Naive thymus-derived CD4-positive, alpha-beta T cell (primary cell): ENCODE measurements at regions of chr7 and their contacts with region 1.

Region 1: GRCh38 chr7:107168233-107169119 is at the start of gene HBP1:
- DNase-seq: peak; percentile 80 to 100 (median 99)
- ATAC-seq: peak; percentile 87
- H3K4me3 ChIP-seq: peak within 1 kb of the TSS; percentile 84
- H3K4me3 Mint-ChIP-seq: peak within 1 kb of the TSS; percentile 92 to 100 (median 96)
- H3K27ac ChIP-seq: peak within 1 kb of the TSS; percentile 100
- H3K27ac Mint-ChIP-seq: peak within 1 kb of the TSS; percentile 98 to 100 (median 99)
- H3K4me1 ChIP-seq: peaks cover 28 to 35% of the 10 kb centered on the region in 2 donors
- H3K4me1 Mint-ChIP-seq: peaks cover 25 to 50% (median 41%) of the 10 kb centered on the region in 7 donors
- H3K27me3 ChIP-seq: no peaks in the 10 kb centered on the region
- H3K27me3 Mint-ChIP-seq: peaks cover 0 to 28% (median 0%) of the 10 kb centered on the region in 5 donors
- total RNA-seq, gene HBP1: 34.6 to 219 (median 124) TPM

Region 2: GRCh38 chr7:105531792-105532671 is 1636.4 kb before region 1 on chr7 and contains the start of gene RINT1:
- CTCF ChIA-PET with region 1: no interaction called
- POLR2A ChIA-PET with region 1: interaction called, 4 read pairs
- intact Hi-C with region 1: loop called (anchors 1 to 5 kb)
- DNase-seq: peak; percentile 72 to 90 (median 81)
- ATAC-seq: peak; percentile 97
- H3K4me3 ChIP-seq: peak within 1 kb of the TSS; percentile 86
- H3K4me3 Mint-ChIP-seq: peak within 1 kb of the TSS; percentile 87 to 99 (median 93)
- H3K27ac ChIP-seq: peak within 1 kb of the TSS; percentile 83
- H3K27ac Mint-ChIP-seq: peak within 1 kb of the TSS; percentile 87 to 98 (median 92)
- H3K4me1 ChIP-seq: peaks cover 13 to 18% of the 10 kb centered on the region in 2 donors
- H3K4me1 Mint-ChIP-seq: peaks cover 21 to 59% (median 38%) of the 10 kb centered on the region in 7 donors
- H3K27me3 ChIP-seq: no peaks in the 10 kb centered on the region
- H3K27me3 Mint-ChIP-seq: no peaks in the 10 kb centered on the region
- total RNA-seq, gene RINT1: 23.0 to 31.8 (median 26.0) TPM

Region 3: DNA sequence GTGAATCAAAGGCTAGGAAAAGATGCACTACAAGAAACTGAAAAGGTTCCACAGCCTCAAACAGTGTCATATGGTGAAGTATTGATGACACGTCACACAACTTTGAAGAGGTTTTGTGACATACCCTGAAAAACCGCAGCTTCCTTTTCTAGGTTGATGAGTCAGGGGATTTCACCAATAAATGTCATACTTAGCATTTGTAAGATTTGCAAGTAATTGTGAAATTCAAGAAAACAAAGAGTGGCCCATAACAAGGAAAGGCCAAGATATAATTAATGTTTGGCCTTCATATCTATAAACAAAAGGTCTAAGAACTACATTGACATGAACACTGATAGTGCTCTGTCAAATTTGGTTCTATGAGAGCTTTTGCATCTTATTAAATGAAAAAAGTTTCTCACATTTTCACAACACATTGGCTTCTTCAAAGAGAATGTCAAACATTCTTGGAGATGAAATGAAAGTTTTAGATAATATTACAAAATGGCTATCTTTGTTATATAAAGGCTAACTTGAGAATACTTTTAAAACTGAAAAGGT is 821.7 kb before region 1 on chr7:
- CTCF ChIA-PET with region 1: no interaction called
- POLR2A ChIA-PET with region 1: no interaction called
- intact Hi-C with region 1: loop called in 1 of 2 experiments (anchors 5 kb)
- DNase-seq: peak in 8 of 9 donors; percentile 28 to 61 (median 50)
- ATAC-seq: peak; percentile 78
- H3K4me3 ChIP-seq: no peak overlapping the region
- H3K4me3 Mint-ChIP-seq: peak overlapping the region in 1 of 10 donors; percentile 47
- H3K27ac ChIP-seq: no peak overlapping the region
- H3K27ac Mint-ChIP-seq: peak overlapping the region in 2 of 9 donors; percentile 19 to 94
- H3K4me1 ChIP-seq: peaks cover 6 to 19% of the 10 kb centered on the region in 2 donors
- H3K4me1 Mint-ChIP-seq: peaks cover 5 to 35% (median 13%) of the 10 kb centered on the region in 7 donors
- H3K27me3 ChIP-seq: no peaks in the 10 kb centered on the region
- H3K27me3 Mint-ChIP-seq: peaks cover 1 to 61% (median 31%) of the 10 kb centered on the region in 5 donors

Region 4: DNA sequence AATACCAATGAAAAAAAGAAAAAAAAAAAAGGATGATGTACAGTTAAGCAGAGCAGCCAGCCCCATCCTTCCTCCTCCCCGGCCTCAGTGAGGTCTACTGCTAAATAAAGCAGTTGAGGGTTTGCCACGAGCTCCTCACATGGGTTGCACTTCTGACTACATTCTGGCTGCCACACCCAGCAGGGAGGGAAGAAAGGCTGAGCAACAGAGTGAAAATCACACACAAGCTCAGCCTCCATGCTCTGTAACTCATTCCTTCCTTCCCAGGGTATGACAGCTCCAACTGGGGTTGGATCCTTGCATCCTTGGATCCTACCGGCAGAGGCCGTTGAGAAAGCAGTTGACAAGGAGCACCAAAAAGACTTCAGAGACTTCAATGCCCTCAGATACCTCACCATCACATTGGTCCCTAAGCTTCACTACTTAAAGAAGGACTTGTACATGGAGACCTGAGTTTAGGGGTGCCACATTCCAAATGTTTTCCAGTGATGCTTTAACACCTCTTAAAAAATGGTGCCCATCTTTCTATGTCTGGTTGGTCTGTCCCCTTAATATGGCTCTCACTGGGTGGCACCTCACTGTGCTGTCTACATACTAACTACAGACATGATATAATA is 356.3 kb before region 1 on chr7:
- CTCF ChIA-PET with region 1: no interaction called
- POLR2A ChIA-PET with region 1: no interaction called
- intact Hi-C with region 1: no loop called
- DNase-seq: no peak
- ATAC-seq: peak; percentile 72
- H3K4me3 ChIP-seq: no peak overlapping the region
- H3K4me3 Mint-ChIP-seq: no peak overlapping the region
- H3K27ac ChIP-seq: no peak overlapping the region
- H3K27ac Mint-ChIP-seq: peak overlapping the region in 1 of 9 donors; percentile 32
- H3K4me1 ChIP-seq: no peaks in the 10 kb centered on the region
- H3K4me1 Mint-ChIP-seq: peaks cover 0 to 15% (median 3%) of the 10 kb centered on the region in 7 donors
- H3K27me3 ChIP-seq: peaks cover 0 to 1% of the 10 kb centered on the region in 2 donors
- H3K27me3 Mint-ChIP-seq: peaks cover 0 to 5% (median 0%) of the 10 kb centered on the region in 5 donors

Region 5: GRCh38 chr7:106865130-106866041 is 303.1 kb before region 1 on chr7 and contains the start of gene PIK3CG:
- CTCF ChIA-PET with region 1: no interaction called
- POLR2A ChIA-PET with region 1: interaction called, 18 read pairs
- intact Hi-C with region 1: loop called (anchors 1 kb)
- DNase-seq: peak in 7 of 9 donors; percentile 43 to 77 (median 70)
- ATAC-seq: peak; percentile 96
- H3K4me3 ChIP-seq: peak within 1 kb of the TSS; percentile 62
- H3K4me3 Mint-ChIP-seq: peak within 1 kb of the TSS; percentile 86 to 98 (median 94)
- H3K27ac ChIP-seq: peak within 1 kb of the TSS; percentile 75
- H3K27ac Mint-ChIP-seq: peak within 1 kb of the TSS; percentile 90 to 96 (median 95)
- H3K4me1 ChIP-seq: peaks cover 50% of the 10 kb centered on the region in 2 donors
- H3K4me1 Mint-ChIP-seq: peaks cover 44 to 85% (median 72%) of the 10 kb centered on the region in 7 donors
- H3K27me3 ChIP-seq: no peaks in the 10 kb centered on the region
- H3K27me3 Mint-ChIP-seq: no peaks in the 10 kb centered on the region
- total RNA-seq, gene PIK3CG: 25.1 to 54.9 (median 30.6) TPM

Region 6: GRCh38 chr7:107180378-107180777 is 11.9 kb after region 1 on chr7:
- CTCF ChIA-PET with region 1: interaction called, 4 read pairs
- POLR2A ChIA-PET with region 1: interaction called, 54 read pairs
- intact Hi-C with region 1: loop called (anchors 1 kb)
- DNase-seq: peak in 1 of 9 donors; percentile 64
- ATAC-seq: peak; percentile 43
- H3K4me3 ChIP-seq: no peak overlapping the region
- H3K4me3 Mint-ChIP-seq: peak overlapping the region in 4 of 10 donors; percentile 3 to 22 (median 7)
- H3K27ac ChIP-seq: no peak overlapping the region
- H3K27ac Mint-ChIP-seq: peak overlapping the region in 7 of 9 donors; percentile 1 to 42 (median 33)
- H3K4me1 ChIP-seq: peaks cover 3 to 6% of the 10 kb centered on the region in 2 donors
- H3K4me1 Mint-ChIP-seq: peaks cover 11 to 74% (median 60%) of the 10 kb centered on the region in 7 donors
- H3K27me3 ChIP-seq: no peaks in the 10 kb centered on the region
- H3K27me3 Mint-ChIP-seq: no peaks in the 10 kb centered on the region

Region 7: DNA sequence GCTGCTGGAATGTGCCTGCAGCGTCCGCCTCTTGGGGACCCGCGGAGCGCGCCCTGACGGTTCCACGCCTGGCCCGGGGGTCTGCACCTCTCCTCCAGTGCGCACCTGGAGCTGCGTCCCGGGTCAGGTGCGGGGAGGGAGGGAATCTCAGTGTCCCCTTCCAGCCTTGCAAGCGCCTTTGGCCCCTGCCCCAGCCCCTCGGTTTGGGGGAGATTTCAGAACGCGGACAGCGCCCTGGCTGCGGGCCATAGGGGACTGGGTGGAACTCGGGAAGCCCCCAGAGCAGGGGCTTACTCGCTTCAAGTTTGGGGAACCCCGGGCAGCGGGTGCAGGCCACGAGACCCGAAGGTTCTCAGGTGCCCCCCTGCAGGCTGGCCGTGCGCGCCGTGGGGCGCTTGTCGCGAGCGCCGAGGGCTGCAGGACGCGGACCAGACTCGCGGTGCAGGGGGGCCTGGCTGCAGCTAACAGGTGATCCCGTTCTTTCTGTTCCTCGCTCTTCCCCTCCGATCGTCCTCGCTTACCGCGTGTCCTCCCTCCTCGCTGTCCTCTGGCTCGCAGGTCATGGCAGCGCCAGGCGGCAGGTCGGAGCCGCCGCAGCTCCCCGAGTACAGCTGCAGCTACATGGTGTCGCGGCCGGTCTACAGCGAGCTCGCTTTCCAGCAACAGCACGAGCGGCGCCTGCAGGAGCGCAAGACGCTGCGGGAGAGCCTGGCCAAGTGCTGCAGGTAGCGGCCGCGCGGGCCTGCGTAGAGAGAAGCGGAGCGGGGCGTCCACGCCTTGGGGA is 492.8 kb after region 1 on chr7:
- CTCF ChIA-PET with region 1: no interaction called
- POLR2A ChIA-PET with region 1: no interaction called
- intact Hi-C with region 1: loop called in 1 of 2 experiments (anchors 1 kb)
- DNase-seq: peak in 7 of 9 donors; percentile 12 to 60 (median 14)
- ATAC-seq: peak; percentile 66
- H3K4me3 ChIP-seq: peak overlapping the region; percentile 30
- H3K4me3 Mint-ChIP-seq: peak overlapping the region; percentile 56 to 96 (median 84)
- H3K27ac ChIP-seq: no peak overlapping the region
- H3K27ac Mint-ChIP-seq: peak overlapping the region in 1 of 9 donors; percentile 87
- H3K4me1 ChIP-seq: peaks cover 0 to 2% of the 10 kb centered on the region in 2 donors
- H3K4me1 Mint-ChIP-seq: peaks cover 12 to 44% (median 21%) of the 10 kb centered on the region in 7 donors
- H3K27me3 ChIP-seq: peaks cover 3 to 19% of the 10 kb centered on the region in 2 donors
- H3K27me3 Mint-ChIP-seq: peaks cover 0 to 67% (median 49%) of the 10 kb centered on the region in 5 donors

Region 8: GRCh38 chr7:108569381-108570145 is 1401.1 kb after region 1 on chr7 and contains the starts of genes DNAJB9 and THAP5:
- CTCF ChIA-PET with region 1: no interaction called
- POLR2A ChIA-PET with region 1: interaction called, 5 read pairs
- intact Hi-C with region 1: loop called (anchors 1 to 2 kb)
- DNase-seq: peak; percentile 94 to 100 (median 100)
- ATAC-seq: peak; percentile 94
- H3K4me3 ChIP-seq: peak within 1 kb of the TSS; percentile 86
- H3K4me3 Mint-ChIP-seq: peak within 1 kb of the TSS; percentile 93 to 99 (median 98)
- H3K27ac ChIP-seq: peak within 1 kb of the TSS; percentile 98
- H3K27ac Mint-ChIP-seq: peak within 1 kb of the TSS; percentile 98 to 100 (median 100)
- H3K4me1 ChIP-seq: peaks cover 21 to 34% of the 10 kb centered on the region in 2 donors
- H3K4me1 Mint-ChIP-seq: peaks cover 18 to 81% (median 68%) of the 10 kb centered on the region in 7 donors
- H3K27me3 ChIP-seq: no peaks in the 10 kb centered on the region
- H3K27me3 Mint-ChIP-seq: peaks cover 0 to 3% (median 0%) of the 10 kb centered on the region in 5 donors
- total RNA-seq, gene DNAJB9: 22.7 to 50.0 (median 29.3) TPM
- total RNA-seq, gene THAP5: 21.0 to 54.7 (median 30.8) TPM